Motor neuron (in vitro differentiated cells): ENCODE measurements at regions of chr5 and their contacts with region 1.

Region 1: DNA sequence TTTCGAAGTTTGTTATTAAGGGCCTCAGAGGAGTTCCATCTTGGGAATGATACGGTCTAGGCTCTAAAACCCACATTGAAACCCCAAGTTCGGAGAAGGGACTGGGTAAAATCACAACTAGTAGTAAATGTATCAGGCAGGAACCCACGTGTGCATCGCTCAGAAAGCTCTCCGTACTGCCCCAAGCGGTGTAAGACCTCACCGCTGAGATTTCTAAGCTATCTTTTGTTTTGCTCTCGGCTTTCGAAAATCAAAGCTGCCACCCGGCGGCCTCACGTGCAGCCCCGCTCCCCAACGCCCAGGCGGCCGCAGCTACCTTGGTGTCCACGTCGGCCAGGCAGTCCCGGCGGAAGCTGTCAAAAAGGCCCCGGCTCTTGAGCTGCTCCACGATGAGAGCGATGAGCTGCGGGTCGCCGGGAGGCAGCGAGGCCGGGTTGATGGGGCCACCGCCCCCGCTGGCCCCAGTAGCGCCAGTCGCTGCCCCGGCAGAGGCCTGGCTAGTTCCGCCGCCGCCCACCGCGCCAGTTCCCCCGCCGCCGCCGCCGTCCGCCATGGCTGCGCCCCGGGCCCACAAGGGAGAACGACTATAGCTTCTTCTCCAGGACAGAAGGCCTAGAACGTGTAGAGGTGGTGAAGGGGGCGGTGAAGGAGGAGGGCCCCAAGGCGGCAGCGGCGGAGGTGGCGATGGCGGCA is 420 bp downstream of the BOD1 start:
- ATAC-seq: peak; percentile 47 to 73 (median 61)
- H3K4me3 ChIP-seq: peak overlapping the region; percentile 66 to 85 (median 70)
- H3K27ac ChIP-seq: peak overlapping the region; percentile 94 to 99
- H3K4me1 ChIP-seq: peaks cover 17 to 18% of the 10 kb centered on the region in 2 donors

Region 2: DNA sequence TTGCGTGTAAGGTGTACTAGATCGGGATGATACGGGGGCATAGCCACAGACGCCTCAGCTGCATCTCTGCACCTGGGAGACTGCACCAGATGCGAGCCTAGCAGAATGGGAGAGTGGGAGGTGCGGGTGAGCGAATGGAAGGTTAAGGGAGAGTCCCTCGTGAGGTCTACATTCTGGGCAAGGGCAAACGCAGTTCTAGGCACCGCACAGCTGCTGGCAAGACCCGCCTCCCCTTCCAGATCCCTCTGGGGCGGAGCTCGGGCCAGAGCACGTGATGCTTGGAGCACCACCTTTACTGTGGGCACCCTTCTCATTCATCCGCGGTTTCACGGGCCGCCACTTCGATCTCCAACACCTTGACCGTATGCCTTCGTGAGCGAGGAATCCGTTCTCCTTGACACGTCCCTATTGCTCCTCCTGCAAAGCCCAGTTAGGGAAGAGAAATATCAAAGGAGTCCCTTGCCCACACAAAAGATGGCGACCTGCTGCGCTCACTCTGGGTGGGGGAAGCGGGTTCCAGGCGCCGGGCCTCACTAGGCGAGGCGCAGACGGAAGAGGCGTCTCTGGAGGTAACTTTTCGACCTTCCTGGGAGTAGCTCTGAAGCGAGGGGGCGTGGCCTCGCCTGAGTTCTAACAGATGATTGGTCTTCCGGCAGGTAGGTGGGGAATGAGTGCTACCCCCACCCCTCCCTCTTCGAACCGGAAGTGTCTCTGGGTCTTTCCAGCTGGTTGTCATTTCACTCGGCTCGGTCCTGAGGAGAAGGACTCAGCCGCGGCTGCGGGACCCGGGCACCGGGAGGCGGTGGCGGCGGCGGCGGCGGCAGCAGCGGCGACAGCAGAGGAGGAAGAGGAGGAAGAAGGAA is 271.8 kb after region 1 on chr5 and contains the start of gene CPEB4:
- in situ Hi-C with region 1: loop called in 1 of 9 experiments (anchors 25 kb)
- ATAC-seq: peak; percentile 94 to 97 (median 95)
- H3K4me3 ChIP-seq: peak within 1 kb of the TSS; percentile 60 to 91 (median 69)
- H3K27ac ChIP-seq: peak within 1 kb of the TSS; percentile 98
- H3K4me1 ChIP-seq: peaks cover 0 to 4% of the 10 kb centered on the region in 2 donors
- total RNA-seq, gene CPEB4: 10.8 to 92.2 (median 36.5) TPM

Region 3: GRCh38 chr5:173972925-173973615 is 357.0 kb after region 1 on chr5:
- in situ Hi-C with region 1: loop called (anchors 5 to 25 kb)
- ATAC-seq: peak; percentile 65 to 92 (median 74)
- H3K4me3 ChIP-seq: peak overlapping the region in 2 of 5 donors; percentile 12 to 14
- H3K27ac ChIP-seq: no peak overlapping the region
- H3K4me1 ChIP-seq: peaks cover 22 to 39% of the 10 kb centered on the region in 2 donors

Region 4: DNA sequence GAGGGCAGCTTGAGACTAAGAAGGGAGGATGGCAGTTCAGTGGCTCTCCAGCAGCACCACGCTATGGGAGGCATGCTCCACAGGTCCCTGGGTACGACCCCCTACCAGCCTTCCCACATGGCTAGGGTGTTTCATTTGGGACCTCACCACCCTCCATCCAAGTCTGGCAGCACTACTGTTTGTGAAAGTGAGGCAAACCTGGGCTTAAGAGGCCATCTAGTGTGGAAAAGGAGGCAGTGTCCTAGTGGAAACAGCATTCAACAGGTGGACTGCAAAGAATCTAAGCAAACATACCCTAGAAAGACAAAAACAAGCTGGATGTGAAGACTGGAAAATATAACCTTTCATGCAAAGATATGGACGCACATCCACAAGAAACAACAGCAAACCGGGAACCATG is 368.2 kb after region 1 on chr5:
- in situ Hi-C with region 1: loop called in 3 of 9 experiments (anchors 10 to 25 kb)
- ATAC-seq: no peak
- H3K4me3 ChIP-seq: no peak overlapping the region
- H3K27ac ChIP-seq: no peak overlapping the region
- H3K4me1 ChIP-seq: no peaks in the 10 kb centered on the region